ENCODE measurements at regions of chr7 and their contacts with region 1.

Region 1: DNA sequence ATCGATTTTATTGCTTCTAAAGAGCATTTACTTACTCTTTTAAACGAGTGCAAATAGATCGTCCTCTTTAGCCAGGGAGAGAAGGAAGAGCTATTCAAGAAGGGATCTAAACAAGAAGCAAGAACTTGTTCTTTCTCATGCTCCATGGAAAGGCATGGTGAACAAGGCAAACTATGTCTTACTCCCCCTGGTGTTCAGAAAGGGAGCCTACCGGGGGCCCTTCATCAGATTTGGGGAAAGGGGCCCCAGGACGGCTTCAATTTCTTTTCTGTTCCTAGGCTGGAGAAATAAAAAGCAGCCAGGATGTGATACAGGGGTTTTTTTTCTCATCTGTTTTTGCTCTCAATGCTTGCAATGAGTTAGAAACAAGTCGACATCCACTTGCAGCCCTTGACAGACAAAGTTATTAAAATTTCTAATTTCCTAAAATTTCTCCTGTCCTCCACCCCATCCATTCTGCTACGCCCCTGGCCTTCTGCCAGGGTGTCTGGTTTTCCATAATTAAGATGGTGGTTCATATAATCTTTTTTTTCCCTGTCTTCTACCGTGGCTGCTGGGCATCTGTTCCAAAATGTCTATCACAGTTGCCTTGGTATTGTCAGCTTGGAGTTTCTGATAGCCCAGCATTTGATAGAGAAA is 214.4 kb downstream of the CREB5 start:
- DNase-seq: peak; percentile 60
- H3K4me3 ChIP-seq: no peak overlapping the region
- H3K27ac ChIP-seq: no peak overlapping the region
- H3K4me1 ChIP-seq: peaks cover 3 to 8% of the 10 kb centered on the region in 2 experiments; a peak in 2 of 4 replicates
- H3K27me3 ChIP-seq: no peaks in the 10 kb centered on the region
- CTCF ChIP-seq: peak; percentile 86
- EP300 ChIP-seq: no peak
- RAD21 ChIP-seq: peak; percentile 76

Region 2: DNA sequence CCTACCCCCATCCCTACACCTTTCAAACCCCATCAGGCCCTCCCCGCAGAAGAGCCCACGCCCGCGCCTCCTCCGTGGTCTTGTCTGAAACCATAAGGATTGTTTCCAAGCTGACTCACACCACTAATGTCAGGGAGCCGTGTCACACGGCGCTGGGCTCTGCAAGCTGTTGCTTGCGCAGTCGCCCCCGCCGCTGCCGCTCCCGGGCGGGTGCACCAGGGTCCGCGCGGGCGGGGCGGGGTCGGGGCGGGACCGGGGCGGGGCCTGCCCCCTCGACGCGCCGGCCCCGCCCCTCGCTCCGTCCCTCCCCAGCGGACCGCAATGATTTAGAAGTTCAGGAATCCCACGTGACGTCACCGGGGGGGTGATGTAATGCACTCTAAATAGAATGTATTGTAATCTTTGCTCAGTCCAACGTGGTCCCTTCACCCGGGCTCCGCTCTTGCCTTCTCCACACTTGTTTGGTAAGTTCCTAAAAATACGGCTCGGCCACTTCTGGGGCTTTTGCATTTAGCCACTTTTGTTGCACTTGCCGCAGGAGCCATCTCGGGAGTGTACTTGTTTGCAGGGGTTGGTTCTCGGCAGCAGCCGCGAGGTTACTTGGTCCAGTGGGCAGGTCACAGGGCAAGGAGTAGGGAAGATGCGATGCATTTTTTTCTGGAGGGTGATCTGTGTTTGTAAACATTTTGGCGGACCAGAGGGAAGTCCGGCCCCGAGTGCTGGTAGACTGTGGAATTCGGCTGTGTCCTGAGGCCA is 217.6 kb before region 1 on chr7:
- CTCF ChIA-PET with region 1: interaction called, 10 read pairs
- POLR2A ChIA-PET with region 1: no interaction called
- DNase-seq: peak; percentile 95
- H3K4me3 ChIP-seq: peak overlapping the region; percentile 55 to 77
- H3K27ac ChIP-seq: peak overlapping the region in 1 of 2 experiments; percentile 42; a peak in 2 of 4 replicates
- H3K4me1 ChIP-seq: peaks cover 3 to 24% of the 10 kb centered on the region in 2 experiments; a peak in 3 of 4 replicates
- H3K27me3 ChIP-seq: no peaks in the 10 kb centered on the region; the same call in 1 of the 2 replicates
- CTCF ChIP-seq: no peak
- EP300 ChIP-seq: no peak
- RAD21 ChIP-seq: no peak

Region 3: DNA sequence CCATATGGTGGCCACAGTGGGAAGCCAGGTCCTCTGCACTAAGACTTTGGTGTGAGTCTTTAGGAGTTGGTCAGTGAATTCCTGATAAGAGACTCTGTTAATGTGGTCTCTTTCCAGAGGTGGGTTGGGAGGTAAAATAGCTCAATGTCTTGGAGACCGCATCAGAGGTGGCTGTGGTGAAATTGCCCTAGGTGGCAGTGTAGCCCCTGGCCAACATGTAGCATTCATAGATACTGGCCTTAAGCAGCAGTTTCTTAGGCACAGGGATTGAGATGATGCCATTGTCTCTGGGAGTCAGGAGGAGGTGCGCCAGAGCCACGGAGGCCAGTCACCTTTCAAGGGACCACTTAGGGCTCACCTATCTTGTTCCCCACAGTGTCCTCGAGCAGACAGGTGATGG is 11.7 kb before region 1 on chr7:
- CTCF ChIA-PET with region 1: interaction called, 19 read pairs
- POLR2A ChIA-PET with region 1: no interaction called
- DNase-seq: no peak
- H3K4me3 ChIP-seq: no peak overlapping the region
- H3K27ac ChIP-seq: no peak overlapping the region
- H3K4me1 ChIP-seq: peaks cover 0 to 14% of the 10 kb centered on the region in 2 experiments; a peak in 2 of 4 replicates
- H3K27me3 ChIP-seq: no peaks in the 10 kb centered on the region
- CTCF ChIP-seq: peak; percentile 47
- EP300 ChIP-seq: no peak
- RAD21 ChIP-seq: peak; percentile 46

Measured in SK-N-SH (cell line).